ENCODE measurements at regions of chr19 and their contacts with region 1.

Region 1: GRCh38 chr19:49142866-49143335 is 12.3 kb downstream of the HRC start:
- DNase-seq: peak; percentile 65
- ATAC-seq: peak; percentile 90 to 95 (median 92)
- H3K4me3 ChIP-seq: peak overlapping the region; percentile 18
- H3K4me3 Mint-ChIP-seq: peak overlapping the region; percentile 73
- H3K27ac ChIP-seq: no peak overlapping the region
- H3K27ac Mint-ChIP-seq: peak overlapping the region in 1 of 2 donors; percentile 80
- H3K4me1 ChIP-seq: peaks cover 19% of the 10 kb centered on the region
- H3K4me1 Mint-ChIP-seq: peaks cover 16 to 23% of the 10 kb centered on the region in 2 donors
- H3K27me3 ChIP-seq: peaks cover 3% of the 10 kb centered on the region
- H3K27me3 Mint-ChIP-seq: peaks cover 10 to 30% of the 10 kb centered on the region in 2 donors
- CTCF ChIP-seq: no peak

Region 2: DNA sequence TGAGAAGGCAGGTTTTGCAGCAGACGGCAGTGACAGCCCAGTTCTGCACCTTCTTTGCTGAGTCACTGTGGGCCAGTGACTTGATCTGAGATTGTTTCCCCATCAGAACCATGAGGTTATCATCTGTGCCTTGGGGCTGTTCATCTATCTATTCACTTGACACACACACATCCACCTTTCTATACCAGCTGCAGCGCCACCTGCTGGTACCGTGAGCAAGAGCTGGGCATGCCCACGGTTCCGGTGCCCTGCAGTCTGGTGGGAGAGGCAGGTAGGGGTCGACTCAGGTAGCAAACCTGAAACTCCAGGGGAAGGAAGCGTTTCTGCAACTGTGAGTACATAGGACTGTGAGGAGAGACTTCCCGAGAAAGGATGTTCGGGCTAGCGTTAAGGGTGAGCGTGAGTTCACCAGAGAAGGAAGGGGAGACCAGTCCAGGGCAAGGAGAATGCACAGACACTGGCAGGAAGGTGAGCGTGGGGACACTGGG is 36.2 kb before region 1 on chr19:
- intact Hi-C with region 1: no loop called
- DNase-seq: peak; percentile 52 to 84
- ATAC-seq: peak; percentile 67 to 81 (median 69)
- H3K4me3 ChIP-seq: no peak overlapping the region
- H3K4me3 Mint-ChIP-seq: peak overlapping the region; percentile 19
- H3K27ac ChIP-seq: no peak overlapping the region
- H3K27ac Mint-ChIP-seq: peak overlapping the region; percentile 48 to 65
- H3K4me1 ChIP-seq: no peaks in the 10 kb centered on the region
- H3K4me1 Mint-ChIP-seq: peaks cover 12 to 24% of the 10 kb centered on the region in 2 donors
- H3K27me3 ChIP-seq: no peaks in the 10 kb centered on the region
- H3K27me3 Mint-ChIP-seq: no peaks in the 10 kb centered on the region
- CTCF ChIP-seq: peak; percentile 77

Region 3: GRCh38 chr19:49127674-49128544 is 15.0 kb before region 1 on chr19:
- intact Hi-C with region 1: loop called (anchors 2 kb)
- DNase-seq: peak; percentile 92 to 98
- ATAC-seq: peak; percentile 92 to 99 (median 95)
- H3K4me3 ChIP-seq: peak overlapping the region; percentile 40
- H3K4me3 Mint-ChIP-seq: peak overlapping the region; percentile 87
- H3K27ac ChIP-seq: peak overlapping the region; percentile 29
- H3K27ac Mint-ChIP-seq: peak overlapping the region; percentile 48 to 81
- H3K4me1 ChIP-seq: peaks cover 15% of the 10 kb centered on the region
- H3K4me1 Mint-ChIP-seq: peaks cover 12 to 21% of the 10 kb centered on the region in 2 donors
- H3K27me3 ChIP-seq: no peaks in the 10 kb centered on the region
- H3K27me3 Mint-ChIP-seq: no peaks in the 10 kb centered on the region
- CTCF ChIP-seq: no peak

Region 4: DNA sequence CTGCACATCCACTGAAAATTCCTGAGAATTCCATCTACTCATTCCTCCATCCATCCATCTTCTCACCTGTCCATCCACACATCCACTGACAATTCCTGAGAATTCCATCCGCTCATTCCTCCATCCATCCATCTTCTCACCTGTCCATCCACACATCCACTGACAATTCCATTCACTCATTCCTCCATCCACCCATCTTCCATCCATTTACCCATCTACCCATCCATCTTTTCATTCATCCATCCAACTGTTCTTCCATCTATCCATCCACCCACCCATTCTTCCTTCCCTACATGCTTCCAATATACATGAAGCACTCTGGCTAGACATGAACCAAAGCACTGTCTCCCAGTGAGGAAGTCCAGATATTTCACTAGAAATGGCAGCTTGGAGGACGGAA is 30.3 kb after region 1 on chr19:
- intact Hi-C with region 1: no loop called
- DNase-seq: no peak
- ATAC-seq: no peak
- H3K4me3 ChIP-seq: no peak overlapping the region
- H3K4me3 Mint-ChIP-seq: no peak overlapping the region
- H3K27ac ChIP-seq: no peak overlapping the region
- H3K27ac Mint-ChIP-seq: no peak overlapping the region
- H3K4me1 ChIP-seq: no peaks in the 10 kb centered on the region
- H3K4me1 Mint-ChIP-seq: no peaks in the 10 kb centered on the region
- H3K27me3 ChIP-seq: no peaks in the 10 kb centered on the region
- H3K27me3 Mint-ChIP-seq: peaks cover 0 to 3% of the 10 kb centered on the region in 2 donors
- CTCF ChIP-seq: no peak

Region 5: GRCh38 chr19:49210108-49210900 is 67.4 kb after region 1 on chr19:
- intact Hi-C with region 1: no loop called
- DNase-seq: peak in 1 of 2 donors; percentile 60
- ATAC-seq: peak in 2 of 3 donors; percentile 71 to 75
- H3K4me3 ChIP-seq: no peak overlapping the region
- H3K4me3 Mint-ChIP-seq: no peak overlapping the region
- H3K27ac ChIP-seq: no peak overlapping the region
- H3K27ac Mint-ChIP-seq: no peak overlapping the region
- H3K4me1 ChIP-seq: peaks cover 10% of the 10 kb centered on the region
- H3K4me1 Mint-ChIP-seq: no peaks in the 10 kb centered on the region
- H3K27me3 ChIP-seq: no peaks in the 10 kb centered on the region
- H3K27me3 Mint-ChIP-seq: peaks cover 0 to 5% of the 10 kb centered on the region in 2 donors
- CTCF ChIP-seq: no peak

Measured in natural killer cell (primary cell).